ENCODE measurements at regions of chr21 and their contacts with region 1.

Region 1: DNA sequence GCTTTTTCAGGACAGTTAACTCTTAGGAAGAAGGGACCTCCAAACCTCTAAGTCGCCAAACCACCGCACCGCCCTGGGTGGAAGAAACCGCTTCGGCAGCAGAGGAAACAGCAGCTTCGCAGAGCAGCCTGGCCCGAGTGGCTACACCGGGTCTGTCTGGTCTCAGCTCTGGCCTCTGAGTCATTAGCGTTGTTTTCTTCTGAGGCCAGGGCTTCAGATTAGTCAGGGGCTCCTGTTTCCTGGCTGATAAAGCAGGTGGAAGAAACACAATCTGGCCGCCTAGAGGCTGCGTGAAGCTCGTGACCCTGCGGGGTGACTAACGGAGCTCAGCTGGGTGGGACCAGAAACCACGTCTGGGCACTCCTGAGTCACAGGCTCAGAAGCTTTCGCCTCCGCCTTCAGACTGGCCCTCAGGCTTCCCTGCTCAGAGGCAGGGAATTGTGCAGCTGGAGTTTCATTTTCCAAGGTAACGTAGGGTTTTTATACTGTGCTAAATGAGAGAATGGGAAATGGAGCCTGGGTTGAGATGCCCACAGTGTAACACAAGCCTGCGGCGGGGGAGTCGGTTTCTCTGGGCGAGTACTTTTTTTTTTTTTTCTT is 44.9 kb downstream of the CHAF1B start:
- DNase-seq: peak; percentile 100
- H3K4me3 ChIP-seq: peak overlapping the region; percentile 60
- H3K27ac ChIP-seq: peak overlapping the region; percentile 85
- H3K4me1 ChIP-seq: peaks cover 26% of the 10 kb centered on the region
- H3K27me3 ChIP-seq: no peaks in the 10 kb centered on the region

Region 2: DNA sequence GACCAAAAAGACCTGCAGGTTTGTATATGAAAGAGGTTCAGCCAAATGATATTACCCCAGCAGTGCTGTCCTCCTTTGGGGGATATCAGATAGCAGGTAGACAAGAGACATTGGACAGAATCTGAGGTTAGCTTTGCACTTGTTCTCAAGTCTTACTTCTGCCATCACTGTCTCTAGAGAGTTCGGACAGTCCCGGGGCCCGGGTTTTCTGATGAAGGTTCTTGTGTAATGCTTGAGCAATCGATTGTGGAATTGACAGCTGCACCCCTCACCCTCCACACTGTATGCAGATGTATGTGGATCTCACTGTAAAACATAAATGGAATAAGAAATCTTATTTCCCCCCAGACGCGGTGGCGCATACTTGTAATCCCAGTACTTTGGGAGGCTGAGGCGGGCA is 166.2 kb before region 1 on chr21:
- in situ Hi-C with region 1: no loop called
- DNase-seq: no peak
- H3K4me3 ChIP-seq: no peak overlapping the region
- H3K27ac ChIP-seq: no peak overlapping the region
- H3K4me1 ChIP-seq: no peaks in the 10 kb centered on the region
- H3K27me3 ChIP-seq: no peaks in the 10 kb centered on the region

Region 3: DNA sequence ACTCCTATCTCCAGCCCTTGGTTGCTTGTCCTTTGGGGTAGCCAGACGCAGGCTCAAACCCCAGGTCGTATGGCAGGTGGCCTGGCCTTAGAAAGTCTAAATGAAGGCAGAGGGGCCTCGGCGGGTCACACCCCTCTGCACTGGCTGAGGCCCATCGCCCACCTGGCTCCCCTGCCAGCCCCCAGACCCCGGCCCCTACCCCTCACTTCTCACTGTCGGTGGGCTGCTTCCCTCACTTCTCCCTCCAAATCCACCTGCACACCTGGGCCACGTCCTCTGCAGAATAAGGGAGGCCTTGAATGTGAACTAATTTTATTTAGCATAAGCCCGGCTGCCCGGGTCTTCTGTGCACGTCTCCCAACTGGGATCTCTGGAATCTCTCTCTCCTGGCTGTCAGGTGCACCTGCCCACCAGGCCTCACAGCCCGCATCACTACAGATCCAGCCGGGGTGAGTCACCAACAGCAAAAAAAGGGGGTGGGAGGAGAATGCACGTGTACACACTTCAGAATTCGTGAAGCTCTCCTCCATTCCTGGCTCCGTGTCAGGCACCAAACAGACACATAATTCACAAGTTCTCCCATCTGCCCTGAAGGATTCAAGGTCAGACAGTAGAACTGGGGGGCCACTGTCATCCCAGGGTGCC is 161.4 kb after region 1 on chr21:
- in situ Hi-C with region 1: loop called (anchors 10 kb)
- DNase-seq: no peak
- H3K4me3 ChIP-seq: no peak overlapping the region
- H3K27ac ChIP-seq: no peak overlapping the region
- H3K4me1 ChIP-seq: peaks cover 6% of the 10 kb centered on the region; the same call in 1 of the 2 replicates
- H3K27me3 ChIP-seq: peaks cover 33% of the 10 kb centered on the region

Measured in GM23248 (cell line).